Pancreas (tissue), 10 donors: ENCODE measurements at regions of chr7 and their contacts with region 1.

Region 1: GRCh38 chr7:30983042-30983913 is 19.5 kb downstream of the GHRHR start:
- DNase-seq: peak; percentile 61 to 98 (median 86)
- ATAC-seq: peak; percentile 83 to 91 (median 87)
- H3K4me3 ChIP-seq: no peak overlapping the region
- H3K27ac ChIP-seq: no peak overlapping the region
- H3K4me1 ChIP-seq: no peaks in the 10 kb centered on the region
- H3K27me3 ChIP-seq: no peaks in the 10 kb centered on the region
- CTCF ChIP-seq: peak; percentile 83 to 95 (median 93)

Region 2: GRCh38 chr7:31114593-31115343 is 131.5 kb after region 1 on chr7:
- intact Hi-C with region 1: loop called in 1 of 3 experiments (anchors 5 kb)
- DNase-seq: peak in 1 of 6 donors; percentile 9
- ATAC-seq: peak in 2 of 4 donors; percentile 65 to 75
- H3K4me3 ChIP-seq: no peak overlapping the region
- H3K27ac ChIP-seq: no peak overlapping the region
- H3K4me1 ChIP-seq: no peaks in the 10 kb centered on the region
- H3K27me3 ChIP-seq: no peaks in the 10 kb centered on the region
- CTCF ChIP-seq: no peak

Region 3: GRCh38 chr7:31122649-31123058 is 139.4 kb after region 1 on chr7:
- intact Hi-C with region 1: loop called in 2 of 3 experiments (anchors 2 to 5 kb)
- DNase-seq: peak in 5 of 6 donors; percentile 58 to 80 (median 61)
- ATAC-seq: peak; percentile 96 to 97 (median 96)
- H3K4me3 ChIP-seq: no peak overlapping the region
- H3K27ac ChIP-seq: no peak overlapping the region
- H3K4me1 ChIP-seq: peaks cover 0 to 5% (median 0%) of the 10 kb centered on the region in 3 donors
- H3K27me3 ChIP-seq: no peaks in the 10 kb centered on the region
- CTCF ChIP-seq: peak; percentile 66 to 77 (median 74)

Region 4: DNA sequence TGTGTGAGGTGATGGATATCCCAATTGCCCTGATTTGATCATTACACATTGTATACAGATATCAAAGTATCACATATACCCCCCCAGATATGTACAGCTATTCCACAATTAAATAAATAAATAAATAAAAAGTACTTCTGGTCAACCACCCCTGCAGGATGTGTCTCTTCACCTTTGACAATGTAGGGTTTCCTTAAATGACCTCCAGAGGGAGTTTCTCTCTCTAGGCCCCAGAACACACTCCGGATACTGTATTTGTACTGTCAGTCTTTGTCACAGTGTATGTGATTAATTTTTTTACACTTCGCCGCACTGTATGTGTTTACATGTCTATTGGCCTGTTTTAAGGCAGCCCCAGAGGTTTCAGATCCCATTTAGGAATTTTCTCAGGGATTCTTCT is 192.4 kb after region 1 on chr7:
- intact Hi-C with region 1: no loop called
- DNase-seq: no peak
- ATAC-seq: no peak
- H3K4me3 ChIP-seq: no peak overlapping the region
- H3K27ac ChIP-seq: no peak overlapping the region
- H3K4me1 ChIP-seq: no peaks in the 10 kb centered on the region
- H3K27me3 ChIP-seq: no peaks in the 10 kb centered on the region
- CTCF ChIP-seq: no peak